K562 (cell line): ENCODE measurements at regions of chr6 and their contacts with region 1.

Region 1: GRCh38 chr6:37638414-37639341 is 59.0 kb downstream of the MDGA1 start:
- DNase-seq: peak in 1 of 4 experiments; percentile 55
- ATAC-seq: peak; percentile 43
- H3K4me3 ChIP-seq: no peak overlapping the region
- H3K27ac ChIP-seq: peak overlapping the region; percentile 37; the same call in 2 of the 3 replicates
- H3K4me1 ChIP-seq: peaks cover 14 to 20% of the 10 kb centered on the region in 2 experiments
- H3K27me3 ChIP-seq: peaks cover 0 to 32% of the 10 kb centered on the region in 2 experiments; a peak in 3 of 5 replicates
- CTCF ChIP-seq: no peak
- EP300 ChIP-seq: peak; percentile 27; the same call in 1 of the 2 replicates
- POLR2A ChIP-seq: no peak
- RAD21 ChIP-seq: no peak

Region 2: DNA sequence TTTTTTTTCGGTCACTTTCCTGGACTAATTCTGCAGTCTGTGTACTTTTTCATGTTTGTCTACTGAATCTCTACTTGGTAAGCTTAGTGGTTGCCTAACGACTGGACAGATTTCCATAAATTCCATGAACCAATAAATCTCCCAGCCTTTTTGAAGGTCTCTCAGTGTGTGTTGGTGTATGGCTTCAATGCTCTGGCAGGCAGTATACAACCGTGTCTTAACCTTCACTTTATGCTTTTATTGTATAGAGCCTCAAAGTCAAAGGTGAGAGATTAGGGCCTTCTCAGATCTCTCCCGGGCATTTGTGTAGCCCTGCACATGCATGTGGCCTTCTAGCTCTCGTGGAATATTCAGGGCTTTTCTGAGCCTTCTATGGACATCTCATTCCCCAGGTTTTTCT is 220.0 kb before region 1 on chr6:
- CTCF ChIA-PET with region 1: no interaction called
- POLR2A ChIA-PET with region 1: no interaction called
- in situ Hi-C with region 1: no loop called
- intact Hi-C with region 1: no loop called
- DNase-seq: no peak
- ATAC-seq: no peak
- H3K4me3 ChIP-seq: no peak overlapping the region
- H3K27ac ChIP-seq: no peak overlapping the region
- H3K4me1 ChIP-seq: no peaks in the 10 kb centered on the region; a peak in 2 of 5 replicates
- H3K27me3 ChIP-seq: no peaks in the 10 kb centered on the region
- CTCF ChIP-seq: no peak
- EP300 ChIP-seq: no peak
- POLR2A ChIP-seq: no peak
- RAD21 ChIP-seq: no peak

Region 3: DNA sequence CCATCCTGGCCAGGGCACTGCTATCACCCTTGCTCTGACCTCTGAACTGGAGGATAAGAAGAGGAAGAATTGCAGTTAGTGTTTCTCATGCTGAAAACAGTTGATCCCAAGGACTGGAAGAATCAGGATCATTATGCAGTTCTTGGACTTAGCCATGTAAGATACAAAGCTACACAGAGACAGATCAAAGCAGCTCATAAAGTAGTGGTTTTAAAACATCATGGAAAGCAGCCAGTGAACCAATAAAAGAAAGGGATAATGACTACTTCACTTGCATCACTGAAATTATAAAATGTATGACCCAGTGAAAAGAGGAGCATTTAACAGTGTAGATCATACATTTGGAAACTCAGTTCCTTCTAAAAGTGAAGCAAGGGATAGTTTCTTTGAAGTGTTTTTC is 1124.2 kb after region 1 on chr6:
- CTCF ChIA-PET with region 1: no interaction called
- POLR2A ChIA-PET with region 1: no interaction called
- in situ Hi-C with region 1: no loop called
- intact Hi-C with region 1: loop called (anchors 5 kb)
- DNase-seq: no peak
- ATAC-seq: no peak
- H3K4me3 ChIP-seq: no peak overlapping the region
- H3K27ac ChIP-seq: no peak overlapping the region
- H3K4me1 ChIP-seq: no peaks in the 10 kb centered on the region
- H3K27me3 ChIP-seq: no peaks in the 10 kb centered on the region
- CTCF ChIP-seq: no peak
- EP300 ChIP-seq: no peak
- POLR2A ChIP-seq: no peak
- RAD21 ChIP-seq: no peak